ENCODE measurements at regions of chr4 and their contacts with region 1.

Region 1: GRCh38 chr4:98745366-98745765 is 87.0 kb upstream of the TSPAN5 start:
- DNase-seq: peak in 2 of 4 experiments; percentile 29 to 78
- ATAC-seq: peak; percentile 87
- H3K4me3 ChIP-seq: no peak overlapping the region
- H3K27ac ChIP-seq: no peak overlapping the region
- H3K4me1 ChIP-seq: no peaks in the 10 kb centered on the region; a peak in 1 of 5 replicates
- H3K27me3 ChIP-seq: no peaks in the 10 kb centered on the region
- CTCF ChIP-seq: peak; percentile 69 to 84 (median 72)
- EP300 ChIP-seq: no peak
- POLR2A ChIP-seq: no peak
- RAD21 ChIP-seq: peak; percentile 64 to 80

Region 2: GRCh38 chr4:98828801-98829200 is 83.4 kb after region 1 on chr4:
- CTCF ChIA-PET with region 1: no interaction called
- POLR2A ChIA-PET with region 1: no interaction called
- in situ Hi-C with region 1: no loop called
- intact Hi-C with region 1: loop called (anchors 5 kb)
- DNase-seq: no peak
- ATAC-seq: peak; percentile 57
- H3K4me3 ChIP-seq: no peak overlapping the region
- H3K27ac ChIP-seq: no peak overlapping the region
- H3K4me1 ChIP-seq: no peaks in the 10 kb centered on the region
- H3K27me3 ChIP-seq: no peaks in the 10 kb centered on the region
- CTCF ChIP-seq: peak in 2 of 3 experiments; percentile 19 to 31; a peak in 3 of 6 replicates
- EP300 ChIP-seq: no peak
- POLR2A ChIP-seq: no peak
- RAD21 ChIP-seq: peak; percentile 18 to 36; a peak in 3 of 4 replicates

Region 3: GRCh38 chr4:98939892-98940298 is 194.5 kb after region 1 on chr4:
- CTCF ChIA-PET with region 1: no interaction called
- POLR2A ChIA-PET with region 1: no interaction called
- in situ Hi-C with region 1: no loop called
- intact Hi-C with region 1: loop called (anchors 5 kb)
- DNase-seq: peak; percentile 34 to 73 (median 45)
- ATAC-seq: peak; percentile 88
- H3K4me3 ChIP-seq: no peak overlapping the region
- H3K27ac ChIP-seq: no peak overlapping the region
- H3K4me1 ChIP-seq: no peaks in the 10 kb centered on the region
- H3K27me3 ChIP-seq: no peaks in the 10 kb centered on the region
- CTCF ChIP-seq: peak; percentile 63 to 82 (median 80); a peak in 5 of 6 replicates
- EP300 ChIP-seq: no peak
- POLR2A ChIP-seq: no peak
- RAD21 ChIP-seq: peak; percentile 48 to 62

Region 4: DNA sequence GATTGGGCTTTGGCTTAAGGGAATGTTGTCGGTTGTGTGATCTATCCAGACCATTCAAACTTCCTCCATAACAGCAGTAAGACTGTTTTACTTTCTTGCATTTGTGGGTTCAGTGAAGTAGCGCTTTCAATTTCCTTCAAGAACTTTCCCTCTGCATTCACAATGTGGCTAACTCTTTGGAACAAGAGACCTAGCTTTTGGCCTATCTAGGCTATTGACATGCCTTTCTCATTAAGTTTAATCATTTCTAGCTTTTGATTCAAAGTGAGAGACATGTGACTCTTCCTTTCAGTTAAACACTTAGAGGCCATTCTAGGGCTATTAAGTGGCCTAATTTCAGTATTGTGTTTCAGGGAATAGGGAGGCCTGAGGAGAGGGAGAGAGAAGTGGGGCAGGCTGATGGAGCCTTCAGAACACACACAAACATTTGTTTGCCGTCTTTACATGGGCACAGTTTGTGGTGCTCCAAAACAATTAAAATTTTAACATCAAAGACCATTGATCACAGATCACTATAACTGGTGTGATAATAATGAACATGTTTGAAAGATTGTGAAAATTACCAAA is 309.1 kb after region 1 on chr4:
- CTCF ChIA-PET with region 1: interaction called, 6 read pairs
- POLR2A ChIA-PET with region 1: interaction called, 4 read pairs
- in situ Hi-C with region 1: loop called (anchors 10 kb)
- intact Hi-C with region 1: loop called (anchors 2 kb)
- DNase-seq: no peak
- ATAC-seq: no peak
- H3K4me3 ChIP-seq: no peak overlapping the region
- H3K27ac ChIP-seq: no peak overlapping the region
- H3K4me1 ChIP-seq: no peaks in the 10 kb centered on the region; a peak in 2 of 5 replicates
- H3K27me3 ChIP-seq: no peaks in the 10 kb centered on the region
- CTCF ChIP-seq: no peak
- EP300 ChIP-seq: no peak
- POLR2A ChIP-seq: no peak
- RAD21 ChIP-seq: no peak

Measured in K562 (cell line).